Activated T-helper 2 cell treated with anti-CD3 and anti-CD28 coated beads, Interferon-gamma antibody, Interleukin-2, Interleukin-4, amounts not matched to agents 10 μg/mL and 5 μg/mL and 100 μg/mL, durations not matched to agents 14 hours and 24 hours and 36 hours (primary cell): ENCODE measurements at regions of chr3 and their contacts with region 1.

Region 1: GRCh38 chr3:101635954-101636798 is 40.8 kb downstream of the ZBTB11 start:
- DNase-seq: peak; percentile 53
- H3K4me3 Mint-ChIP-seq: no peak overlapping the region
- H3K27ac Mint-ChIP-seq: no peak overlapping the region
- H3K4me1 Mint-ChIP-seq: peaks cover 2% of the 10 kb centered on the region
- H3K27me3 Mint-ChIP-seq: no peaks in the 10 kb centered on the region

Region 2: GRCh38 chr3:101573449-101574387 is 62.5 kb before region 1 on chr3 and contains the start of gene PCNP:
- intact Hi-C with region 1: loop called (anchors 1 kb)
- DNase-seq: peak; percentile 99
- H3K4me3 Mint-ChIP-seq: peak within 1 kb of the TSS; percentile 96
- H3K27ac Mint-ChIP-seq: peak within 1 kb of the TSS; percentile 99
- H3K4me1 Mint-ChIP-seq: peaks cover 56% of the 10 kb centered on the region
- H3K27me3 Mint-ChIP-seq: no peaks in the 10 kb centered on the region
- total RNA-seq, gene PCNP: 190 and 192 TPM in 2 replicates

Region 3: GRCh38 chr3:101588616-101589015 is 47.6 kb before region 1 on chr3:
- intact Hi-C with region 1: loop called (anchors 5 kb)
- DNase-seq: no peak
- H3K4me3 Mint-ChIP-seq: no peak overlapping the region
- H3K27ac Mint-ChIP-seq: peak overlapping the region; percentile 22
- H3K4me1 Mint-ChIP-seq: peaks cover 23% of the 10 kb centered on the region
- H3K27me3 Mint-ChIP-seq: no peaks in the 10 kb centered on the region

Region 4: GRCh38 chr3:101762041-101762646 is 126.0 kb after region 1 on chr3:
- intact Hi-C with region 1: no loop called
- DNase-seq: no peak
- H3K4me3 Mint-ChIP-seq: no peak overlapping the region
- H3K27ac Mint-ChIP-seq: no peak overlapping the region
- H3K4me1 Mint-ChIP-seq: peaks cover 15% of the 10 kb centered on the region
- H3K27me3 Mint-ChIP-seq: no peaks in the 10 kb centered on the region